Heart left ventricle (tissue), 16 donors: ENCODE measurements at regions of chr17 and their contacts with region 1.

Region 1: DNA sequence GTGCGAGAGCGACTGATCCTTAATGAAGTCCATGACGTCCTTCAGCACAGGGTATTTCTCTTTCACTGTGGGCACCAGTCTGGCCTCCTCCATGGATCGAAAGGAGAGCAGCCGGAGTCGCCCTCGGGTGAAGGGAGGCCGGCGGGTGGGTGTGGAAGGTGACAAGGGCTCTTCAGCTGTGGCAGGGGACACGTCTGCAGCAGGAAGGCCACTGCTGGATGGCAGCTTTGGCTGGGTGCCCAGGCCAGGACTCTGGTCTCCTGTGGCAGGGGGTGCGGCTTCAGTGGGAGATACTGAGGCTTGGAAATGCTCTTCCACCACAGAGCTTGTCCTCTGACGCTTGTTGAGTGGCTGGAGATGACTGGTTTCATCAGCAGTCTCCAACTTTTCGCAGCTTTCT is 78.5 kb downstream of the ZZEF1 start:
- DNase-seq: peak; percentile 44 to 80 (median 70)
- ATAC-seq: peak; percentile 73 to 89 (median 86)
- H3K4me3 ChIP-seq: no peak overlapping the region
- H3K27ac ChIP-seq: no peak overlapping the region
- H3K4me1 ChIP-seq: no peaks in the 10 kb centered on the region
- H3K27me3 ChIP-seq: no peaks in the 10 kb centered on the region
- CTCF ChIP-seq: no peak
- POLR2A ChIP-seq: no peak

Region 2: GRCh38 chr17:3935140-3935542 is 129.2 kb before region 1 on chr17:
- intact Hi-C with region 1: loop called in 1 of 10 experiments (anchors 10 kb)
- DNase-seq: peak in 4 of 5 donors; percentile 73 to 83 (median 78)
- ATAC-seq: peak; percentile 87 to 98 (median 96)
- H3K4me3 ChIP-seq: no peak overlapping the region
- H3K27ac ChIP-seq: no peak overlapping the region
- H3K4me1 ChIP-seq: peaks cover 0 to 6% (median 0%) of the 10 kb centered on the region in 12 donors
- H3K27me3 ChIP-seq: no peaks in the 10 kb centered on the region
- CTCF ChIP-seq: peak; percentile 60 to 82 (median 72)
- POLR2A ChIP-seq: no peak

Region 3: DNA sequence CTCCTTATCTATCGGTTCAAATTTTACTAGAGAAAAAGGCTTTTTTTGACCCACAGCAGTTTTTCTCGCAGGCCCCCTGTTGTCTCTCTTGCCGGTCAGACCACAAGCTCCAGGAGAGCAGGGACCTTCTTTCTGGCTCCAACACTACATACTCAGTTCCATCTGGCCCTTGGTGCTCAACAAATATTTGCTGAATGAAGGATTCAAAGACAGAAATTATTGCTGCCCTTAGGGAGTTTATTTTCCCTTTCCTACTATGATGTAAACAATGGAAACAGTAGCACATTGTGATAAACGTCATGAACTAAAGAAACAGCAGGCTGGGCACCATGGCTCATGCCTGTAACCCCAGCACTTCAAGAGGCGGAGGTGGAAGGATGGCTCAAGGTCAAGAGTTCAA is 41.1 kb before region 1 on chr17:
- intact Hi-C with region 1: no loop called
- DNase-seq: no peak
- ATAC-seq: no peak
- H3K4me3 ChIP-seq: no peak overlapping the region
- H3K27ac ChIP-seq: no peak overlapping the region
- H3K4me1 ChIP-seq: no peaks in the 10 kb centered on the region
- H3K27me3 ChIP-seq: no peaks in the 10 kb centered on the region
- CTCF ChIP-seq: no peak
- POLR2A ChIP-seq: no peak

Region 4: DNA sequence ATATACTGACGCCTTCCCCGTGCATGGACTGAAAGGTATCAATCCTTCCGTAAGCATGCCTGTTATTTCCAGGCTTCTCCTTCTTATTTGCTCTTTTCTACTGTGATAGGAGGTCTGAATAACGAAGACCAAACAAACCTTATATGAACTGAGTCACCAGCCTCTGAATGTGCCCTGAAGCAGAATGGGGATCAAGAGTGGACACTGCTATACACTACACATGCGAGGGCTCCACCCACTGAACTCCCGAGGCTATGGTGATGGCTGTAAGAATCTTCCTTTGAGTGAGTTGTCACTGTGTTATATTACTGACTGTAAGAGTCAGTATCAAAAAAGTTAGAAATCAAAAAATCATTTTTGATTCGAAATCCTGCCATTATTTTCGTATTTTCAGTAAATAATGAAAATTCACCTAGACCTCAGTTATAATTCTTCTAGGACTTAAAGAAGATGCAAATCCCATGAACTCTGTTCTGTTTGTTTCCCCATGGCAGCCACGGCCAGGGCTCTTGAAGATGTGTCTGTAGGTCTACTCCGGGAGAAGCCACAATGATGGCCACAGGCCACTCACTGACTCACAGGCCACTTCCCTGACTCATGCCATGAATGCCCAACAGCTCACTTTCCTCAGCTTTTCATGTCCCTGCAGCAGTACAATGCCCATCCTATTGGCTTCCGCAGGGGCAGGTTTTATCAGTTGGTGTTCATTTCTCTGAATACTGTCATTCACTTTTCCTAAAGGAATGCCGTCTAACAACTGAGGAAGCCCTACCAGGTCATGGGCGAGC is 23.7 kb after region 1 on chr17:
- intact Hi-C with region 1: no loop called
- DNase-seq: no peak
- ATAC-seq: no peak
- H3K4me3 ChIP-seq: no peak overlapping the region
- H3K27ac ChIP-seq: no peak overlapping the region
- H3K4me1 ChIP-seq: peaks cover 0 to 9% (median 0%) of the 10 kb centered on the region in 12 donors
- H3K27me3 ChIP-seq: no peaks in the 10 kb centered on the region
- CTCF ChIP-seq: no peak
- POLR2A ChIP-seq: no peak